Psoas muscle (tissue), 8 donors: ENCODE measurements at regions of chr3 and their contacts with region 1.

Region 1: GRCh38 chr3:15113463-15113862 is 14.5 kb upstream of the RBSN start:
- DNase-seq: no peak
- ATAC-seq: no peak
- H3K4me3 ChIP-seq: no peak overlapping the region
- H3K27ac ChIP-seq: no peak overlapping the region
- H3K4me1 ChIP-seq: no peaks in the 10 kb centered on the region
- H3K27me3 ChIP-seq: no peaks in the 10 kb centered on the region
- CTCF ChIP-seq: no peak

Region 2: GRCh38 chr3:15256861-15257341 is 143.4 kb after region 1 on chr3:
- intact Hi-C with region 1: no loop called
- DNase-seq: peak in 1 of 2 donors; percentile 43
- ATAC-seq: peak; percentile 69 to 86 (median 72)
- H3K4me3 ChIP-seq: no peak overlapping the region
- H3K27ac ChIP-seq: peak overlapping the region; percentile 59
- H3K4me1 ChIP-seq: peaks cover 3% of the 10 kb centered on the region
- H3K27me3 ChIP-seq: no peaks in the 10 kb centered on the region
- CTCF ChIP-seq: no peak

Region 3: GRCh38 chr3:15384510-15385237 is 271.2 kb after region 1 on chr3:
- intact Hi-C with region 1: loop called (anchors 5 to 10 kb)
- DNase-seq: no peak
- ATAC-seq: no peak
- H3K4me3 ChIP-seq: no peak overlapping the region
- H3K27ac ChIP-seq: no peak overlapping the region
- H3K4me1 ChIP-seq: no peaks in the 10 kb centered on the region
- H3K27me3 ChIP-seq: no peaks in the 10 kb centered on the region
- CTCF ChIP-seq: no peak